ENCODE measurements at regions of chr13 and their contacts with region 1.

Region 1: GRCh38 chr13:99269627-99270241 is 11.6 kb upstream of the GPR18 start:
- DNase-seq: peak; percentile 44
- H3K4me3 Mint-ChIP-seq: no peak overlapping the region
- H3K27ac Mint-ChIP-seq: peak overlapping the region; percentile 16
- H3K4me1 Mint-ChIP-seq: peaks cover 69% of the 10 kb centered on the region
- H3K27me3 Mint-ChIP-seq: no peaks in the 10 kb centered on the region

Region 2: GRCh38 chr13:99087096-99087953 is 182.4 kb before region 1 on chr13:
- CTCF ChIA-PET with region 1: interaction called, 3 read pairs
- intact Hi-C with region 1: loop called (anchors 2 kb)
- DNase-seq: peak; percentile 94
- H3K4me3 Mint-ChIP-seq: peak overlapping the region; percentile 99
- H3K27ac Mint-ChIP-seq: peak overlapping the region; percentile 97
- H3K4me1 Mint-ChIP-seq: peaks cover 30% of the 10 kb centered on the region
- H3K27me3 Mint-ChIP-seq: no peaks in the 10 kb centered on the region

Region 3: GRCh38 chr13:99200432-99201167 is 69.1 kb before region 1 on chr13 and contains the start of gene UBAC2:
- CTCF ChIA-PET with region 1: interaction called, 163 read pairs
- intact Hi-C with region 1: loop called (anchors 1 kb)
- DNase-seq: peak; percentile 95
- H3K4me3 Mint-ChIP-seq: peak within 1 kb of the TSS; percentile 91
- H3K27ac Mint-ChIP-seq: peak within 1 kb of the TSS; percentile 90
- H3K4me1 Mint-ChIP-seq: peaks cover 60% of the 10 kb centered on the region
- H3K27me3 Mint-ChIP-seq: no peaks in the 10 kb centered on the region
- total RNA-seq, gene UBAC2: 43.4 to 44.9 TPM

Region 4: DNA sequence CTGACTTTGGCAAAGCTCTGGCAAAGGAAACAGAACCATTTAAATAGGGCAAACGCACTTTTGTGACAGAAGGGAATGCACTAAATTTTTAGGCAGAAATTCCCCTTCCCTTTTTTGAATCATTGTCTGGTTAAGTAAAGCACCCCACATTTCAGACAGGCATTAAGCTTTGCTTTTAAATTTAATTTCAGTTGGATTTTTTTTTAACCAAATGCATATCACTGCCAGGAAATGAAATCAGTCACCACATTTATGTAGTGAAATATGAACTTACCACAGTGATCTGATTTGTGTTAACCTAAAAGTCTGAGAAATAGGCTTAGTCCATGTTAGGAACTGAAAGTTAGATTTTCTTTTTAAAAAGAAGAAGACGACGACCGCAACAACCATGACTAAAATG is 26.7 kb after region 1 on chr13:
- CTCF ChIA-PET with region 1: interaction called, 49 read pairs
- intact Hi-C with region 1: no loop called
- DNase-seq: no peak
- H3K4me3 Mint-ChIP-seq: peak overlapping the region; percentile 48
- H3K27ac Mint-ChIP-seq: peak overlapping the region; percentile 87
- H3K4me1 Mint-ChIP-seq: peaks cover 75% of the 10 kb centered on the region
- H3K27me3 Mint-ChIP-seq: no peaks in the 10 kb centered on the region

Region 5: GRCh38 chr13:99356158-99357091 is 86.7 kb after region 1 on chr13:
- CTCF ChIA-PET with region 1: interaction called, 19 read pairs
- intact Hi-C with region 1: loop called (anchors 1 kb)
- DNase-seq: peak; percentile 70
- H3K4me3 Mint-ChIP-seq: peak overlapping the region; percentile 58
- H3K27ac Mint-ChIP-seq: peak overlapping the region; percentile 93
- H3K4me1 Mint-ChIP-seq: peaks cover 97% of the 10 kb centered on the region
- H3K27me3 Mint-ChIP-seq: no peaks in the 10 kb centered on the region

Region 6: GRCh38 chr13:99436686-99437416 is 167.1 kb after region 1 on chr13:
- CTCF ChIA-PET with region 1: interaction called, 302 read pairs
- intact Hi-C with region 1: loop called (anchors 1 kb)
- DNase-seq: peak; percentile 98
- H3K4me3 Mint-ChIP-seq: peak overlapping the region; percentile 21
- H3K27ac Mint-ChIP-seq: peak overlapping the region; percentile 23
- H3K4me1 Mint-ChIP-seq: peaks cover 55% of the 10 kb centered on the region
- H3K27me3 Mint-ChIP-seq: no peaks in the 10 kb centered on the region

Region 7: GRCh38 chr13:99542788-99543406 is 273.2 kb after region 1 on chr13:
- CTCF ChIA-PET with region 1: no interaction called
- intact Hi-C with region 1: no loop called
- DNase-seq: peak; percentile 80
- H3K4me3 Mint-ChIP-seq: no peak overlapping the region
- H3K27ac Mint-ChIP-seq: no peak overlapping the region
- H3K4me1 Mint-ChIP-seq: peaks cover 47% of the 10 kb centered on the region
- H3K27me3 Mint-ChIP-seq: no peaks in the 10 kb centered on the region

Region 8: GRCh38 chr13:99606324-99607066 is 336.8 kb after region 1 on chr13:
- CTCF ChIA-PET with region 1: no interaction called
- intact Hi-C with region 1: no loop called
- DNase-seq: peak; percentile 92
- H3K4me3 Mint-ChIP-seq: peak within 1 kb of the TSS; percentile 82
- H3K27ac Mint-ChIP-seq: peak within 1 kb of the TSS; percentile 75
- H3K4me1 Mint-ChIP-seq: peaks cover 23% of the 10 kb centered on the region
- H3K27me3 Mint-ChIP-seq: no peaks in the 10 kb centered on the region

Measured in activated naive CD4-positive, alpha-beta T cell treated with anti-CD3 and anti-CD28 coated beads for 36 hours (primary cell).